ENCODE measurements at regions of chr15 and their contacts with region 1.

Region 1: DNA sequence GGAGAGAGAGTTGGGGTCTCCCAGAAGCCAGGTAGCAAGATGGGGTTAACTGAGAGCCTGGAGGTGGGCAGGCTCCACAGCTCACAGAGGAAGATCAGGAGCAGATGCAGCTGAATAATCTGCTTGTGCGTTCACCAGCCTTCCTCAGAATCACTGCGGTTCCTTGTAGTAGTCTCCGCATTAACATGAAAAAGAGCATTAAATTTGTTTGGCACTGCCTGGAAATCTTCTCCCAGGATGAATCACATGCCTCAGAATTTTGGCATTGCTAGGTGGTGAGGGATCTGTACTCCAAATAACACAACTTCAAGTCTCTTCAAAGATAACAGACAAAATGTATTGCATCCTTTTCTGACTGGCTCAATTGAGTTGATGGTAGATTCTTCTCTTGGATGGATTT is 700.6 kb upstream of the ARRDC4 start:
- DNase-seq: no peak
- ATAC-seq: no peak
- H3K4me3 ChIP-seq: no peak overlapping the region
- H3K4me3 Mint-ChIP-seq: no peak overlapping the region
- H3K27ac ChIP-seq: no peak overlapping the region
- H3K27ac Mint-ChIP-seq: no peak overlapping the region
- H3K4me1 ChIP-seq: no peaks in the 10 kb centered on the region
- H3K4me1 Mint-ChIP-seq: no peaks in the 10 kb centered on the region
- H3K27me3 ChIP-seq: no peaks in the 10 kb centered on the region
- H3K27me3 Mint-ChIP-seq: no peaks in the 10 kb centered on the region
- CTCF ChIP-seq: no peak

Region 2: GRCh38 chr15:97301166-97301565 is 41.2 kb after region 1 on chr15:
- CTCF ChIA-PET with region 1: no interaction called
- POLR2A ChIA-PET with region 1: interaction called, 3 read pairs
- intact Hi-C with region 1: loop called (anchors 10 kb)
- DNase-seq: no peak
- ATAC-seq: no peak
- H3K4me3 ChIP-seq: no peak overlapping the region
- H3K4me3 Mint-ChIP-seq: no peak overlapping the region
- H3K27ac ChIP-seq: no peak overlapping the region
- H3K27ac Mint-ChIP-seq: no peak overlapping the region
- H3K4me1 ChIP-seq: no peaks in the 10 kb centered on the region
- H3K4me1 Mint-ChIP-seq: no peaks in the 10 kb centered on the region
- H3K27me3 ChIP-seq: no peaks in the 10 kb centered on the region
- H3K27me3 Mint-ChIP-seq: no peaks in the 10 kb centered on the region
- CTCF ChIP-seq: no peak

Region 3: GRCh38 chr15:97576929-97577645 is 317.1 kb after region 1 on chr15:
- CTCF ChIA-PET with region 1: no interaction called
- POLR2A ChIA-PET with region 1: no interaction called
- intact Hi-C with region 1: no loop called
- DNase-seq: no peak
- ATAC-seq: no peak
- H3K4me3 ChIP-seq: no peak overlapping the region
- H3K4me3 Mint-ChIP-seq: no peak overlapping the region
- H3K27ac ChIP-seq: no peak overlapping the region
- H3K27ac Mint-ChIP-seq: no peak overlapping the region
- H3K4me1 ChIP-seq: no peaks in the 10 kb centered on the region
- H3K4me1 Mint-ChIP-seq: no peaks in the 10 kb centered on the region
- H3K27me3 ChIP-seq: no peaks in the 10 kb centered on the region
- H3K27me3 Mint-ChIP-seq: no peaks in the 10 kb centered on the region
- CTCF ChIP-seq: no peak